Common myeloid progenitor, CD34-positive (primary cell): ENCODE measurements at regions of chr16 and their contacts with region 1.

Region 1: GRCh38 chr16:81778861-81779535 is at the start of gene PLCG2:
- DNase-seq: peak; percentile 62 to 85 (median 81)
- H3K4me3 ChIP-seq: peak within 1 kb of the TSS; percentile 68 to 91 (median 84)
- H3K27ac ChIP-seq: peak within 1 kb of the TSS in 1 of 2 experiments; percentile 61
- H3K4me1 ChIP-seq: peaks cover 10 to 63% (median 39%) of the 10 kb centered on the region in 4 experiments
- H3K27me3 ChIP-seq: no peaks in the 10 kb centered on the region

Region 2: GRCh38 chr16:81752225-81752875 is 26.6 kb before region 1 on chr16:
- CTCF ChIA-PET with region 1: interaction called, 20 read pairs
- POLR2A ChIA-PET with region 1: interaction called, 5 read pairs
- DNase-seq: peak; percentile 88 to 97 (median 96)
- H3K4me3 ChIP-seq: peak overlapping the region in 3 of 7 experiments; percentile 2 to 48 (median 22)
- H3K27ac ChIP-seq: peak overlapping the region in 1 of 2 experiments; percentile 78
- H3K4me1 ChIP-seq: peaks cover 19 to 88% (median 72%) of the 10 kb centered on the region in 4 experiments
- H3K27me3 ChIP-seq: no peaks in the 10 kb centered on the region

Region 3: DNA sequence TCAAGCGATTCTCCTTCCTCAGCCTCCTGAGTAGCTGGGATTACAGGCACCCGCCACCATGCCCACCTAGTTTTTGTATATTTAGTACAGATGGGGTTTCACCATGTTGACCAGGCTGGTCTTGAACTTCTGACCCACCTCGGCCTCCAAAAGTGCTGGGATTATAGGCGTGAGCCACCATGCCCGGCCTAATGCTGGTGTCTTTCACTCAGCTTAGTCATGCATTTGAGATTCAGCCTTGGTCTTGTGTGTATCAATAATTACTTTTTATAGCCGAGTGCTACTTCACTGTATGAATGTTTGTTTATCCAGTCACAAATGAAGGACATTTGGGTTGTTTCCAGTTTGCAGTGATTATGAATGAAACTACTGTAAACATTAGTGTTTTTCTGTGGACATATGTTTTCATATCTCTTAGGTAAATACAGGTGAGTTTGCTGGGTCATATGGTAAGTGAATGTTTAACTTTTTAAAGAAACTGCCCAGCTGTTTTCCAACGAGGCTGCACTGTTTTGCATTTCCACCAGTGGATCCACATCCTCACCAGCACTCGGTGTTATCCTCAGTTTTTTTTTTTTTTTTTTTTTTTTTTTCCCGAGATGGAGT is 10.9 kb before region 1 on chr16:
- CTCF ChIA-PET with region 1: interaction called, 15 read pairs
- POLR2A ChIA-PET with region 1: no interaction called
- DNase-seq: no peak
- H3K4me3 ChIP-seq: no peak overlapping the region
- H3K27ac ChIP-seq: no peak overlapping the region
- H3K4me1 ChIP-seq: peaks cover 0 to 6% (median 0%) of the 10 kb centered on the region in 4 experiments
- H3K27me3 ChIP-seq: no peaks in the 10 kb centered on the region